H1 (cell line): ENCODE measurements at regions of chr13 and their contacts with region 1.

Region 1: GRCh38 chr13:44879463-44880058 is 109.7 kb downstream of the NUFIP1 start:
- DNase-seq: no peak
- H3K4me3 ChIP-seq: no peak overlapping the region; a peak in 1 of 8 replicates
- H3K27ac ChIP-seq: no peak overlapping the region
- H3K4me1 ChIP-seq: no peaks in the 10 kb centered on the region
- H3K27me3 ChIP-seq: no peaks in the 10 kb centered on the region
- CTCF ChIP-seq: peak; percentile 46 to 66 (median 51)
- EP300 ChIP-seq: no peak
- POLR2A ChIP-seq: no peak
- RAD21 ChIP-seq: peak; percentile 71 to 76

Region 2: GRCh38 chr13:44818428-44818827 is 61.1 kb before region 1 on chr13:
- CTCF ChIA-PET with region 1: interaction called, 13 read pairs
- POLR2A ChIA-PET with region 1: no interaction called
- DNase-seq: no peak
- H3K4me3 ChIP-seq: no peak overlapping the region
- H3K27ac ChIP-seq: no peak overlapping the region
- H3K4me1 ChIP-seq: peaks cover 2 to 18% (median 13%) of the 10 kb centered on the region in 4 experiments
- H3K27me3 ChIP-seq: no peaks in the 10 kb centered on the region
- CTCF ChIP-seq: peak in 2 of 3 experiments; percentile 63 to 73; a peak in 3 of 4 replicates
- EP300 ChIP-seq: no peak
- POLR2A ChIP-seq: no peak
- RAD21 ChIP-seq: peak; percentile 79 to 89

Region 3: GRCh38 chr13:44894001-44894780 is 14.6 kb after region 1 on chr13:
- CTCF ChIA-PET with region 1: interaction called, 27 read pairs
- POLR2A ChIA-PET with region 1: no interaction called
- DNase-seq: no peak
- H3K4me3 ChIP-seq: no peak overlapping the region
- H3K27ac ChIP-seq: no peak overlapping the region
- H3K4me1 ChIP-seq: no peaks in the 10 kb centered on the region
- H3K27me3 ChIP-seq: no peaks in the 10 kb centered on the region
- CTCF ChIP-seq: no peak
- EP300 ChIP-seq: no peak
- POLR2A ChIP-seq: no peak
- RAD21 ChIP-seq: no peak